Naive thymus-derived CD4-positive, alpha-beta T cell (primary cell): ENCODE measurements at regions of chr11 and their contacts with region 1.

Region 1: GRCh38 chr11:65497141-65498041 is 1.5 kb upstream of the MALAT1 start:
- DNase-seq: peak; percentile 95 to 99 (median 98)
- ATAC-seq: peak; percentile 89
- H3K4me3 ChIP-seq: peak overlapping the region; percentile 99
- H3K4me3 Mint-ChIP-seq: no peak overlapping the region
- H3K27ac ChIP-seq: peak overlapping the region; percentile 99
- H3K27ac Mint-ChIP-seq: no peak overlapping the region
- H3K4me1 ChIP-seq: peaks cover 11 to 12% of the 10 kb centered on the region in 2 donors
- H3K4me1 Mint-ChIP-seq: peaks cover 13 to 43% (median 24%) of the 10 kb centered on the region in 7 donors
- H3K27me3 ChIP-seq: no peaks in the 10 kb centered on the region
- H3K27me3 Mint-ChIP-seq: peaks cover 0 to 6% (median 0%) of the 10 kb centered on the region in 5 donors

Region 2: DNA sequence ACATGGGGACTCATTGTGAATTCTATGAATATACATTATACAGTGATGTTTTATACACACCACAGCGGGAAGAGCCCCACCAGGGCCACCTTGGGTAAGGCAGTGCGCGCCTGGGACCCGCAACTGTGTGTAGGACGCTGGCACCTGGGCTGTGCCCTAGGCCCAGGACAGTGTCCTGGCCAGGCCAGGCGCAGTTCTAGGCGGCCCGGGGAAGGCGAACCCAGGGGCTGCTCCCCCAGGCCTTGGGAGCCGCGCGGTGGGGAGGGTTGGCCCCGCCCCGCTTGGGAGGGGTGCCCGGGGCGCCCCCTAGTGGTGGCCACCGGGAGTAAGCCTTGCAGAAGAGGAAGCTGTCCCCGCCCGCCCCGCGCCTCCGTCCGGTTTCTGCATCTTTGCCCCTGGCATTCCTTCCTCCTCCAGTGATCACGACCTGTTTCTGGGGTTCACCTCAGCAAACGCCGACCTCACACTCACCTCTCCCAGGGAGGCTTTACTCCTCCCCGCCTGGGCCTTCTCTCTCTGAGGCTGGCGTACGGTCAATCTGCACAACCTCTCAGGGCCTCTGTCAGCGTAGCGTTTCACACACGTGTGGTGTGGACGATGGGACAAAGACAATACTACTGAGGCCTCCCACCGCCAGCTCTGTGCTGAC is 609.5 kb before region 1 on chr11:
- CTCF ChIA-PET with region 1: no interaction called
- POLR2A ChIA-PET with region 1: no interaction called
- intact Hi-C with region 1: no loop called
- DNase-seq: peak; percentile 74 to 94 (median 84)
- ATAC-seq: peak; percentile 92
- H3K4me3 ChIP-seq: peak overlapping the region; percentile 50
- H3K4me3 Mint-ChIP-seq: peak overlapping the region; percentile 15 to 89 (median 80)
- H3K27ac ChIP-seq: peak overlapping the region; percentile 49
- H3K27ac Mint-ChIP-seq: peak overlapping the region in 8 of 9 donors; percentile 51 to 95 (median 85)
- H3K4me1 ChIP-seq: peaks cover 15 to 21% of the 10 kb centered on the region in 2 donors
- H3K4me1 Mint-ChIP-seq: peaks cover 20 to 32% (median 28%) of the 10 kb centered on the region in 7 donors
- H3K27me3 ChIP-seq: no peaks in the 10 kb centered on the region
- H3K27me3 Mint-ChIP-seq: no peaks in the 10 kb centered on the region

Region 3: GRCh38 chr11:65134386-65135253 is 362.8 kb before region 1 on chr11 and contains the start of gene SYVN1:
- CTCF ChIA-PET with region 1: no interaction called
- POLR2A ChIA-PET with region 1: interaction called, 18 read pairs
- intact Hi-C with region 1: no loop called
- DNase-seq: peak; percentile 88 to 95 (median 93)
- ATAC-seq: peak; percentile 90
- H3K4me3 ChIP-seq: peak within 1 kb of the TSS; percentile 90
- H3K4me3 Mint-ChIP-seq: peak within 1 kb of the TSS; percentile 89 to 100 (median 99)
- H3K27ac ChIP-seq: peak within 1 kb of the TSS; percentile 99
- H3K27ac Mint-ChIP-seq: peak within 1 kb of the TSS; percentile 97 to 100 (median 99)
- H3K4me1 ChIP-seq: peaks cover 10 to 21% of the 10 kb centered on the region in 2 donors
- H3K4me1 Mint-ChIP-seq: peaks cover 31 to 50% (median 40%) of the 10 kb centered on the region in 7 donors
- H3K27me3 ChIP-seq: no peaks in the 10 kb centered on the region
- H3K27me3 Mint-ChIP-seq: no peaks in the 10 kb centered on the region
- total RNA-seq, gene SYVN1: 61.0 to 84.6 (median 67.9) TPM

Region 4: GRCh38 chr11:65290448-65291165 is 206.8 kb before region 1 on chr11:
- CTCF ChIA-PET with region 1: no interaction called
- POLR2A ChIA-PET with region 1: no interaction called
- intact Hi-C with region 1: no loop called
- DNase-seq: no peak
- ATAC-seq: peak; percentile 93
- H3K4me3 ChIP-seq: no peak overlapping the region
- H3K4me3 Mint-ChIP-seq: peak overlapping the region in 2 of 10 donors; percentile 10 to 31
- H3K27ac ChIP-seq: no peak overlapping the region
- H3K27ac Mint-ChIP-seq: peak overlapping the region in 3 of 9 donors; percentile 27 to 58 (median 30)
- H3K4me1 ChIP-seq: no peaks in the 10 kb centered on the region
- H3K4me1 Mint-ChIP-seq: peaks cover 0 to 7% (median 0%) of the 10 kb centered on the region in 7 donors
- H3K27me3 ChIP-seq: no peaks in the 10 kb centered on the region
- H3K27me3 Mint-ChIP-seq: no peaks in the 10 kb centered on the region

Region 5: DNA sequence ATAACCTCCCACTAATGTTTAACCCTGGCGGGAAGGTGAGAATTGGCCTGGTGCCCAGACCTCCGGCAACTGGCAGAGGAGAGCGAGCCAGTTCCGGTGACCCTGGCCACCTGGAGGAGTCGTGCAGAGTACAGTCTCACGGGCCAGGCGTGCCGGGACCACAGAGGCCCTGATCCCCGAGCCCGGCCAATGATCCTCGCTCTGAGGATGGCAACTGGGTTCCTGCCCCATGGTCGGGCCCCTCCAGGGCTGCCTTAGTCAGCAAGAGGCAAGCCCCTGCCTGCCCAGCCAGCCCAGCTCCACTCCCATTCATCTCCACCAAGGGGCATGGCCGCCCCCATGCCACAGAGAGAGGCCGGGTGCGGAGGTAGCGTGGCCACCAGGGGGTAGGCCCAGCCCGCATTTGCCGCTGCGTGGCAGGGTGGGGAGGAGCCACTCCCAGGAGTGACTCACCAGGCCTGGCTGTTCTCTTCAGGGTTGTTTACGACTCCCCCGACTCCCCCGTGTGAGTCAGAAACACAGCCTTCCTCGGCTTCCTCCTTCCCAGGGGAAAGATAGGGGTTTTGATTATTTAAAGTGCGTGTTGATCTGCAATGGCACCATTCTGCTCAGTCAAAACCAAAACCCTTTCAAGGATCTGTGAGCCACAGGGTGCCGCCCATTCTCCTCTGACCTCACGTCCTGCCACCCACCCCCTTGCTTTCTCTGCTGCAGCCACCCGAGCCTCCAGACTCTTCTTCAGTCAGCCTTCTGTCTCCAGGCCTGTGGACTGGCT is 115.2 kb before region 1 on chr11 and contains the start of gene SLC25A45:
- CTCF ChIA-PET with region 1: interaction called, 7 read pairs
- POLR2A ChIA-PET with region 1: interaction called, 460 read pairs
- intact Hi-C with region 1: loop called in 1 of 2 experiments (anchors 1 kb)
- DNase-seq: peak; percentile 82 to 95 (median 91)
- ATAC-seq: peak; percentile 91
- H3K4me3 ChIP-seq: peak within 1 kb of the TSS; percentile 76
- H3K4me3 Mint-ChIP-seq: peak within 1 kb of the TSS; percentile 82 to 98 (median 93)
- H3K27ac ChIP-seq: peak within 1 kb of the TSS; percentile 82
- H3K27ac Mint-ChIP-seq: peak within 1 kb of the TSS; percentile 97 to 100 (median 99)
- H3K4me1 ChIP-seq: peaks cover 42 to 45% of the 10 kb centered on the region in 2 donors
- H3K4me1 Mint-ChIP-seq: peaks cover 31 to 56% (median 46%) of the 10 kb centered on the region in 7 donors
- H3K27me3 ChIP-seq: no peaks in the 10 kb centered on the region
- H3K27me3 Mint-ChIP-seq: no peaks in the 10 kb centered on the region
- total RNA-seq, gene SLC25A45: 20.2 to 90.6 (median 34.1) TPM

Region 6: DNA sequence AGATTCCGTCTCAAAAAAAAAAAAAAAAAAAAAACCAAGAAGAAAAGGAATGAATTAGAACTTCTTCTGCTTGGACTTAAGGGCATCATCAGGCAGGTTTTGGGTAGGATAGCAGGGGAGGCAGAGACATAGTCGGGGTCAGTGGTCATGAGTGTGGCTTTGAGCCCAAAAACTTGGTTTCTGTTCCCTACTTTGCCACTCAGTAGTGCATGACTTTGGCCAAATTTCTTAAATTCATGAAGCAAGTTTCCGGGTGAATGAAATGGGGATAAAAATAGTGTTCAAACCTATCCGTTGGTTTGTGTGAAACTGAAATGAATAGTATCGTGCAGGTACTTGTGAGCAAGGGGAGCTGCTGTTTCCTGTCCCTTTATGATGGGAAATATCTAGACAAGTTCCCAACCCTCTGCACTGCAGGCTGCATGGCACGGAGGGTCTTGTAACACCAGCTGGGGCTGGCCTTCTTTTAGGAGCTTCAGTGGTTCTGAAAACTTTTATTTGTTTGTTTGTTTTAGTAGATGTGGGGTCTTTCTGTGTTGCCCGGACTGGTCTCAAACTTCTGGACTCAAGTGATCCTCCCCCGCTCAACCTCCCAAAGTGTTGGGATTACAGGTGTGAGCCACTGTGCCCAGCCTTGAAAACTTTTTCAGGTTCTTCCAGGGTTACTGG is 56.4 kb before region 1 on chr11:
- CTCF ChIA-PET with region 1: no interaction called
- POLR2A ChIA-PET with region 1: interaction called, 38 read pairs
- intact Hi-C with region 1: no loop called
- DNase-seq: peak in 1 of 9 donors; percentile 12
- ATAC-seq: peak; percentile 45
- H3K4me3 ChIP-seq: no peak overlapping the region
- H3K4me3 Mint-ChIP-seq: peak overlapping the region in 8 of 10 donors; percentile 29 to 71 (median 43)
- H3K27ac ChIP-seq: peak overlapping the region; percentile 3
- H3K27ac Mint-ChIP-seq: peak overlapping the region in 8 of 9 donors; percentile 64 to 90 (median 81)
- H3K4me1 ChIP-seq: peaks cover 0 to 12% of the 10 kb centered on the region in 2 donors
- H3K4me1 Mint-ChIP-seq: peaks cover 17 to 71% (median 53%) of the 10 kb centered on the region in 7 donors
- H3K27me3 ChIP-seq: no peaks in the 10 kb centered on the region
- H3K27me3 Mint-ChIP-seq: no peaks in the 10 kb centered on the region

Region 7: DNA sequence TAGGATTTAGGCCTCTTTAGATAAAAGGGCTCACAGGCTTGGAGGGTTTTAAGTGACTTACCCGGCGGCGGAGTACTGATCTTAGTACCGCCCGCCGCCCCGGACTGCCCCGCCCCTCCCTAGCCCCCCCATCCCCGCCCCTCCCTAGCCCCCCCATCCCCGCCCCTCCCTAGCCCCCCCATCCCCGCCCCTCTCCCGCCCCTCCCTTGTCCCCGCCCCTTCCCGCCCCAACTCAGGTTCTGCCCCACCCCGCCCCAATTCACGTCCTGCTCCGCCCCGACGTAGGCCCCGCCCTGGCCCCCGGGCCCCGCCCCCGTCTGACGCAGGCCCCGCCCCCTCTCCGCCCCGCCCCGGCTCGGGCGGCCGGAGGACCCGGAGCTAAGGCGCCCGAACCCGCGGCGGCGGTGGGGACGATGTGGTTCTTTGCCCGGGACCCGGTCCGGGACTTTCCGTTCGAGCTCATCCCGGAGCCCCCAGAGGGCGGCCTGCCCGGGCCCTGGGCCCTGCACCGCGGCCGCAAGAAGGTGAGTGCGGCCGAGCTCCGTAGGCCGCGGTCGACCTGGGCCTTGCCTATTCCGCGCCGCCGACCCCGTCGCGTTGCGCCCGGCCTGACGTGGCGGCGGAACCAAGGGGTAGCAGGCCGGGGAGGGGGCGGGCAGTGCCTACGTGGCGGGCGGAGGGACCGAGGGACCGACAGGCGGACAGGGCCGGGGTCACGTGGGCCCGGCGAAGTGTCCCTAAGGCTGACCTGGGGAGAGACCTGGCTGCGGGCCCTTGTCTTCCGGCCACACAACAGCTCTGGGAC is 27.6 kb after region 1 on chr11 and contains the start of gene SCYL1:
- CTCF ChIA-PET with region 1: interaction called, 3 read pairs
- POLR2A ChIA-PET with region 1: interaction called, 213 read pairs
- intact Hi-C with region 1: no loop called
- DNase-seq: peak; percentile 58 to 86 (median 77)
- ATAC-seq: peak; percentile 97
- H3K4me3 ChIP-seq: peak within 1 kb of the TSS; percentile 79
- H3K4me3 Mint-ChIP-seq: peak within 1 kb of the TSS; percentile 86 to 96 (median 90)
- H3K27ac ChIP-seq: peak within 1 kb of the TSS; percentile 96
- H3K27ac Mint-ChIP-seq: peak within 1 kb of the TSS; percentile 89 to 98 (median 95)
- H3K4me1 ChIP-seq: peaks cover 31 to 40% of the 10 kb centered on the region in 2 donors
- H3K4me1 Mint-ChIP-seq: peaks cover 32 to 66% (median 54%) of the 10 kb centered on the region in 7 donors
- H3K27me3 ChIP-seq: no peaks in the 10 kb centered on the region
- H3K27me3 Mint-ChIP-seq: no peaks in the 10 kb centered on the region
- total RNA-seq, gene SCYL1: 63.2 to 79.8 (median 70.4) TPM

Region 8: GRCh38 chr11:65637794-65638317 is 140.5 kb after region 1 on chr11 and contains the start of gene SIPA1:
- CTCF ChIA-PET with region 1: no interaction called
- POLR2A ChIA-PET with region 1: interaction called, 13 read pairs
- intact Hi-C with region 1: no loop called
- DNase-seq: peak; percentile 57 to 93 (median 74)
- ATAC-seq: peak; percentile 62
- H3K4me3 ChIP-seq: peak within 1 kb of the TSS; percentile 90
- H3K4me3 Mint-ChIP-seq: peak within 1 kb of the TSS; percentile 89 to 99 (median 95)
- H3K27ac ChIP-seq: peak within 1 kb of the TSS; percentile 97
- H3K27ac Mint-ChIP-seq: peak within 1 kb of the TSS; percentile 76 to 100 (median 97)
- H3K4me1 ChIP-seq: peaks cover 45 to 58% of the 10 kb centered on the region in 2 donors
- H3K4me1 Mint-ChIP-seq: peaks cover 26 to 52% (median 47%) of the 10 kb centered on the region in 7 donors
- H3K27me3 ChIP-seq: no peaks in the 10 kb centered on the region
- H3K27me3 Mint-ChIP-seq: no peaks in the 10 kb centered on the region
- total RNA-seq, gene SIPA1: 145 to 249 (median 198) TPM